Dorsolateral prefrontal cortex (tissue), 120 donors: ENCODE measurements at regions of chr4 and their contacts with region 1.

Region 1: GRCh38 chr4:41548305-41548880 is 10.4 kb downstream of the LIMCH1 start:
- DNase-seq: no peak
- H3K4me3 ChIP-seq: no peak overlapping the region
- H3K27ac ChIP-seq: peak overlapping the region in 1 of 59 donors; percentile 18
- H3K27me3 ChIP-seq: no peaks in the 10 kb centered on the region
- CTCF ChIP-seq: no peak

Region 2: GRCh38 chr4:41334183-41334582 is 214.2 kb before region 1 on chr4:
- intact Hi-C with region 1: no loop called
- DNase-seq: no peak
- H3K4me3 ChIP-seq: no peak overlapping the region
- H3K27ac ChIP-seq: no peak overlapping the region
- H3K27me3 ChIP-seq: no peaks in the 10 kb centered on the region
- CTCF ChIP-seq: no peak

Region 3: DNA sequence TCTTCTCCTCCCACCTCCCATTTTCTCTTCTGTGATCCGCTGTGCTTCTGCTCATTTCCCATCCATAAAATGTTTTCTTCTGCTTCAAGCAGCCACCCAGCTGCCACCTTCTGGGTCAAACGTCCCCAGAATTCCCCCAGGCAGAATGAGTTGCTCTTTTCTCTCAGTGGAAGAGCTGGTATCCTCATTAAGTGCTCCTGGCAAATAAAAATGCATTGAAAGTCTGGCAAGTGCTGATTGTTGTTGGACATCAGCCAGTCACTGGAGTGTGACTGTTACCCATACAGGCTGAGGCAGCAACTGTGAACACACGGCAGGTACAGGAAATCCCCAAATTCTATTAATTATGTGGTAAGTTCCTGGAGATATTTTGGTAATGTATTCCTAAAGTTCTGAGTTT is 42.2 kb after region 1 on chr4:
- intact Hi-C with region 1: loop called in 1 of 2 experiments (anchors 2 kb)
- DNase-seq: peak in 1 of 10 donors; percentile 35
- H3K4me3 ChIP-seq: no peak overlapping the region
- H3K27ac ChIP-seq: peak overlapping the region in 21 of 59 donors; percentile 10 to 68 (median 23)
- H3K27me3 ChIP-seq: no peaks in the 10 kb centered on the region
- CTCF ChIP-seq: no peak